ENCODE measurements at regions of chr9 and their contacts with region 1.

Region 1: GRCh38 chr9:35116898-35117551 is 1.4 kb upstream of the ATOSB start:
- DNase-seq: peak; percentile 97
- H3K4me3 ChIP-seq: peak overlapping the region in 3 of 4 donors; percentile 58 to 63 (median 58)
- H3K27ac ChIP-seq: peak overlapping the region; percentile 90 to 96 (median 92)
- H3K4me1 ChIP-seq: peaks cover 0 to 48% (median 42%) of the 10 kb centered on the region in 4 donors
- H3K27me3 ChIP-seq: no peaks in the 10 kb centered on the region
- CTCF ChIP-seq: peak; percentile 84 to 94 (median 90)
- EP300 ChIP-seq: no peak
- POLR2A ChIP-seq: no peak

Region 2: GRCh38 chr9:35051069-35051967 is 65.7 kb before region 1 on chr9:
- intact Hi-C with region 1: no loop called
- DNase-seq: no peak
- H3K4me3 ChIP-seq: no peak overlapping the region
- H3K27ac ChIP-seq: peak overlapping the region; percentile 45 to 64 (median 58)
- H3K4me1 ChIP-seq: peaks cover 0 to 8% (median 2%) of the 10 kb centered on the region in 4 donors
- H3K27me3 ChIP-seq: no peaks in the 10 kb centered on the region
- CTCF ChIP-seq: peak; percentile 35 to 63 (median 55)
- EP300 ChIP-seq: no peak
- POLR2A ChIP-seq: no peak

Region 3: DNA sequence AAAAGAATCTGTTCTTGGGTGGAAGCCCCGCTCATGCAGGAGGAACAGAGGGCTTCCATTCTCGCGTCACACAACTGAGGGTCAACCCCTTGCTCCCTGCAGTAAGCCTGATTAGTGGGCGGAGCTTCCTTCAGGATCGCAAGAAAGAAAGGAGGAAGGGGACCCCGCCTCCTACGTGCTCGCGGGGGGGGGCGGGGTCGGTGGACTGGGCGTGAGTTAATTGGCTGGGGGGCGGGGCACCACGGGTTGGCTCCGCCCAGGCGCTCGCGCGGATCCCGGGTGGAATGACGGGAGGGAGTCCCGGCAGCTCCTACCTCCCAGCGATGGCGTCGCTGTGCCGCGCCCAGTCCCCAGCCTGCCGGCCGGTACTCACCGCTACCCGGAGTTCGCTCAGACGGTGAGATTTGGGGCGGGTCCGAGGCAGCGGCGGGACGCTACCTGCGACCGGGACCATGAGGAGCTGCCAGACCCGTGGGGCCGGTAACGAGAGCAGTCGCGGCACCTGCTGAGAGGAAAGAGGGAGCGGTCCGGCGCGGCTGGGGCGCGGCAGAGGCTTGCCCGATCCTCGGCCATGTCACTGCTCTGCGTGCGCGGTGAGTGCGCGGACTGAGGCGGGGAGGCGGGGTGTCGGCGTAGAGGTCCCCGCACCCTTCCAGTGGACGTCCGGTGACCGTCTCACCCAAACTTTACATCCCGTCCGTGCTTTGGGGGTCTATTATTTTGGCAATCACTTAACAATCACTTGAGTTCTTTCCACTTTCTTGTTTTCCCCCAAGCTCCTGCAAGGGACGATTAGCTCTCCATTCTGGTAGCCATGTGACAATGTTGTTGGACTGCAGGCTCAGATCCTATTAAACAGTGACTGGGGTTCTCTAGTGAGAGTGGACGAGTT is 44.9 kb after region 1 on chr9 and contains the start of gene UNC13B:
- intact Hi-C with region 1: loop called (anchors 1 kb)
- DNase-seq: peak; percentile 97
- H3K4me3 ChIP-seq: peak within 1 kb of the TSS; percentile 66 to 91 (median 86)
- H3K27ac ChIP-seq: peak within 1 kb of the TSS; percentile 92 to 95 (median 94)
- H3K4me1 ChIP-seq: peaks cover 0 to 15% (median 13%) of the 10 kb centered on the region in 4 donors
- H3K27me3 ChIP-seq: no peaks in the 10 kb centered on the region
- CTCF ChIP-seq: no peak
- EP300 ChIP-seq: no peak
- POLR2A ChIP-seq: peak; percentile 61 to 74
- total RNA-seq, gene UNC13B: 14.6 to 22.2 (median 19.7) TPM

Region 4: DNA sequence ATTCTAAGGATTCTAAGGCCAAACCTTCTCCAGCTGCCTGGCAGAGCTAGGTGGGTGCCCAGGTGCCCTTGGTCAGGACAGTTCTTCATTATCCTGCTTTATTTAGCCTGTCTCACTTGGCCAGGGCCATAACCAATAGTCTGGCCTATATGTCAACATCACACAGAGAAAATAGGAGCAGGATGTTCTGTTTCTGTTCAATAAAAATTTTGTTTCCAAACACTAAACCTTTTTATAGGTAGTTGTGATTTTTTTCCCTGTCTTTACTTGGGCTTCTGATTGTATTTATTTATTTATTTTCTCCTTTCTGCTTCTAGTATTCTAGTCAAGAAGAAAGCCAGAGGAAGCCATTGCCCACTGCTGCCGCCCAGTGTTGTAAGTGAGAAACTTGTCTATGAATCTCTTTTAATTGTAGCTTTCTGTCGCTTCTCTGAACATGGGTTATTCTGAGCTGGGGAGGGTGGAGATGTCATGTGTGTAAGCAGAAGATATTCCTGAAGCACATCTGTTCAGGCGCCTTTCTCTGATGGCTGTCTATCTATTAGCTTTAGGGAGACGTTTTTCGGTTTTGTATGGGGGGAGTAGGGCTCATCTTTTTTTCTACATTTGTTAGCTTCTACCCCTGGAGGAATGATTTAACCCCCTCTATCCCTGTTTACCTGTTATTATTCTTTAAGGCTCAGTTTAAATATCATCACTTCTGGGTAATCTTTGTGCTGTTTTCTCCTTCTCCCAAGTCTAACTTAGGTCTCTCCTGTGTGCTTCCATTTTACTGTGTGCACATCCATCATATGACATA is 141.8 kb after region 1 on chr9:
- intact Hi-C with region 1: loop called (anchors 1 kb)
- DNase-seq: peak; percentile 81
- H3K4me3 ChIP-seq: no peak overlapping the region
- H3K27ac ChIP-seq: no peak overlapping the region
- H3K4me1 ChIP-seq: no peaks in the 10 kb centered on the region
- H3K27me3 ChIP-seq: no peaks in the 10 kb centered on the region
- CTCF ChIP-seq: peak; percentile 59 to 69 (median 64)
- EP300 ChIP-seq: no peak
- POLR2A ChIP-seq: no peak

Region 5: GRCh38 chr9:35481347-35481975 is 364.4 kb after region 1 on chr9:
- intact Hi-C with region 1: loop called (anchors 1 kb)
- DNase-seq: peak; percentile 79
- H3K4me3 ChIP-seq: no peak overlapping the region
- H3K27ac ChIP-seq: no peak overlapping the region
- H3K4me1 ChIP-seq: no peaks in the 10 kb centered on the region
- H3K27me3 ChIP-seq: no peaks in the 10 kb centered on the region
- CTCF ChIP-seq: peak; percentile 56 to 74 (median 64)
- EP300 ChIP-seq: no peak
- POLR2A ChIP-seq: no peak

Region 6: DNA sequence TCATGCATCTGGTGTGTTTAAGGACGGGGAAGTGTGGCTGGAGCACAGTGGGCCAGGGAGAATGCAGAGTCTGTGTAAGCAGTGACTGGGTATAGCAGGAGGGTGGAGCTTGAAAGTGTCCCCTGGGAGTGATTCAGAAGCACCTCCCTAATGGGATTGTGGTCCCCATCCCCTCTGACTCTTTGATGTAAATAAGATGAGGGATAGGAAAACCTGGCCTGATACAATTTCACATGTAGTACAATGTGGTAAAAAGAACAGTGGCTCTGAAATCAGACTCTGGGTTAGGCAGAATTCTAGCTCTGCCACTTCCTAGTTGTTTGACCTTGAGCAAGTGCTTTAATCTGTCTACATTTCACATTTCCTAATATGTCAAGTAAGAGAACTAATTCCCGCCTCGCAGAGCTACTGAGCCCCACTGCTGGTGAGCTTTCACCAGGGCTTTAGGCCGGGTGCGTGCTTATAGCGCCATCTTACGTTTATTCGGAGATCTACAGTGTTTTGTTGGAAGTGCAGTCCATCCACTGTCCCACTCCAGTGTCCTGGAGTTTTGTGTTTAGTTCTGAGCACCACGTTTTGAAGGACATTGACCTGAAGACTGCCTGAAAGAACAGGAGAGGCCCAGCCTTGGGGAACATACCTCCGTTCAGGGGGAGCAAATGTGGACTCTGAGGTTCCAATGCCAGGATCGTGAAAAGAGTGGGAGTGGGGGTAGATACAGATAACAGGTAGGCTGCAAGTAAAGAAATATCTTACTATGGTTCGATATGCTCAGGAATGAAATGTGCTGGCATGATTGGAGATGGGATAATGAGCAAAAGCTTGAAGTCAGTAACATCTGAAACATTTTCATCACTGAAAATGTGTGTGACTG is 436.9 kb after region 1 on chr9:
- intact Hi-C with region 1: loop called (anchors 5 kb)
- DNase-seq: peak; percentile 92
- H3K4me3 ChIP-seq: peak overlapping the region in 1 of 4 donors; percentile 1
- H3K27ac ChIP-seq: peak overlapping the region; percentile 75 to 86 (median 79)
- H3K4me1 ChIP-seq: peaks cover 0 to 47% (median 40%) of the 10 kb centered on the region in 4 donors
- H3K27me3 ChIP-seq: no peaks in the 10 kb centered on the region
- CTCF ChIP-seq: peak; percentile 87 to 93 (median 90)
- EP300 ChIP-seq: no peak
- POLR2A ChIP-seq: no peak